A673 (cell line): ENCODE measurements at regions of chr10 and their contacts with region 1.

Region 1: DNA sequence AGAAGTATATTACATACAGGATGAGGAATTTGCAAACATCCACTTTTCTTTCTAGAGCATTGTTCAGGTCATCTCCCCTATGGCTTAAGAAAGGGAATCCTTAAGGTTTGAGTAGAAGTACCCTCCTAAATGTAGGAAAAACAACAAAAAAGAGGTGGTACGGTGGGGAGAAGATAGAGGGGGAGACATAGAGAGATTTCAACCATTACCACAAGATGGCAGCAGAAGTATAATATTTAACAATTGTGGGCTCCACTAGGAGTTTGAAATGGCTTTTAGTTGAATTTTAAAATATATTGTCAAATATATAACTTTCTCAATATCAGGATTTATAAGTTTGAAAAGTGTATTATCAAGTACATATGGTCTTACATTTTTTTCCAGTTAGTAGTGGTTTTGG is 72.7 kb upstream of the PRKG1 start:
- DNase-seq: peak; percentile 43
- H3K4me3 ChIP-seq: no peak overlapping the region
- H3K27ac ChIP-seq: no peak overlapping the region
- H3K4me1 ChIP-seq: no peaks in the 10 kb centered on the region
- H3K27me3 ChIP-seq: peaks cover 35% of the 10 kb centered on the region
- CTCF ChIP-seq: peak; percentile 66

Region 2: DNA sequence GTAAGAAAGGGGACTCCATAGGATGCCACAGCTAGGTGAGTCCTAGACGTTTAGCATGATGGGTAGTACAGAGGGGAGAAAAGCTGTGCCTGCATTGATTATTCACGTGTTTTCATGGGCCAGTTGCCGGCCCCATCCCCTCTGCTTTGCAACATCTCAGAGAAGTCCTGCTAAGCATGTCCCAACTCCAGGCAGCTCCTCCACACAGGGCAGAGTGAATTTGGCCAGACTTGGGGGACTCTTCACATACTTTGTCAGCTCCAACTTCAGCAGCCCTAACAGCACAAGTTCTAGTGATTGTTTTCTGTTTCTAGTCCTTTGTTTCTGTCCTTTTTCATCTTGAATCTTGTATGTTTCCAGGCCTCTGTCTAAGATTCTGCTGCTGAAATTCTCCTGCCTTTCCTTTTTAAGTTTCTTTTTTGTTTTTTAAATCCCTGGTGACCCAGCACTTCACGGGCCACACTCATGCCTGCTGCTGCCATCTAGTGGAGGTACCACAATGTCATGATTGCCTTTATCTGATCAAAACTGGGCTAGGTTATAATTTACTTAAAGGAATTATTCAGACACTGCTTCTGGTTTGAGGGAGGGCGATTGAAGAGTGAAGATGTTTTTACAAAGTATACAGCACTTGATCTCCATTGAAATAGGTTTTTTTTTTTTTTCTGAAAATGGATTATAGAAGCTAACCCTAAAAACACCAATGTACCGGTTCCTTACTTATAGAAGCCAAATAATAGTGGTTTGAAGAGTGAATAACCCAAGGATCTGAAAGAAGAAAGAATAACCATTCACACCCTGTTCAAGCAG is 420.9 kb after region 1 on chr10:
- CTCF ChIA-PET with region 1: no interaction called
- POLR2A ChIA-PET with region 1: no interaction called
- intact Hi-C with region 1: loop called (anchors 5 kb)
- DNase-seq: peak; percentile 61
- H3K4me3 ChIP-seq: no peak overlapping the region
- H3K27ac ChIP-seq: no peak overlapping the region
- H3K4me1 ChIP-seq: no peaks in the 10 kb centered on the region
- H3K27me3 ChIP-seq: no peaks in the 10 kb centered on the region
- CTCF ChIP-seq: peak; percentile 84